ENCODE measurements at regions of chr10 and their contacts with region 1.

Region 1: GRCh38 chr10:114876602-114877300 is 55.2 kb downstream of the FHIP2A start:
- DNase-seq: peak; percentile 86
- H3K4me3 Mint-ChIP-seq: peak overlapping the region; percentile 53
- H3K27ac Mint-ChIP-seq: peak overlapping the region; percentile 89
- H3K4me1 Mint-ChIP-seq: peaks cover 18% of the 10 kb centered on the region
- H3K27me3 Mint-ChIP-seq: no peaks in the 10 kb centered on the region
- CTCF ChIP-seq: peak; percentile 90

Region 2: GRCh38 chr10:114821293-114821914 is 55.3 kb before region 1 on chr10 and contains the start of gene FHIP2A:
- CTCF ChIA-PET with region 1: interaction called, 6 read pairs
- POLR2A ChIA-PET with region 1: interaction called, 3 read pairs
- intact Hi-C with region 1: loop called (anchors 5 kb)
- DNase-seq: peak; percentile 71
- H3K4me3 Mint-ChIP-seq: peak within 1 kb of the TSS; percentile 85
- H3K27ac Mint-ChIP-seq: peak within 1 kb of the TSS; percentile 97
- H3K4me1 Mint-ChIP-seq: peaks cover 20% of the 10 kb centered on the region
- H3K27me3 Mint-ChIP-seq: no peaks in the 10 kb centered on the region
- CTCF ChIP-seq: peak; percentile 34
- total RNA-seq, gene FHIP2A: 17.2 and 25.9 TPM in 2 replicates

Region 3: GRCh38 chr10:114862456-114862855 is 14.3 kb before region 1 on chr10:
- CTCF ChIA-PET with region 1: interaction called, 42 read pairs
- POLR2A ChIA-PET with region 1: interaction called, 8 read pairs
- intact Hi-C with region 1: no loop called
- DNase-seq: no peak
- H3K4me3 Mint-ChIP-seq: no peak overlapping the region
- H3K27ac Mint-ChIP-seq: no peak overlapping the region
- H3K4me1 Mint-ChIP-seq: no peaks in the 10 kb centered on the region
- H3K27me3 Mint-ChIP-seq: no peaks in the 10 kb centered on the region
- CTCF ChIP-seq: no peak

Region 4: GRCh38 chr10:114893251-114893650 is 16.5 kb after region 1 on chr10:
- CTCF ChIA-PET with region 1: interaction called, 15 read pairs
- POLR2A ChIA-PET with region 1: no interaction called
- intact Hi-C with region 1: no loop called
- DNase-seq: no peak
- H3K4me3 Mint-ChIP-seq: no peak overlapping the region
- H3K27ac Mint-ChIP-seq: no peak overlapping the region
- H3K4me1 Mint-ChIP-seq: peaks cover 6% of the 10 kb centered on the region
- H3K27me3 Mint-ChIP-seq: no peaks in the 10 kb centered on the region
- CTCF ChIP-seq: no peak

Region 5: GRCh38 chr10:114937962-114938855 is 61.5 kb after region 1 on chr10 and contains the start of gene TRUB1:
- CTCF ChIA-PET with region 1: interaction called, 15 read pairs
- POLR2A ChIA-PET with region 1: interaction called, 5 read pairs
- intact Hi-C with region 1: loop called (anchors 2 kb)
- DNase-seq: peak; percentile 96
- H3K4me3 Mint-ChIP-seq: peak within 1 kb of the TSS; percentile 96
- H3K27ac Mint-ChIP-seq: peak within 1 kb of the TSS; percentile 97
- H3K4me1 Mint-ChIP-seq: peaks cover 20% of the 10 kb centered on the region
- H3K27me3 Mint-ChIP-seq: no peaks in the 10 kb centered on the region
- CTCF ChIP-seq: no peak
- total RNA-seq, gene TRUB1: 23.4 and 29.2 TPM in 2 replicates

Region 6: DNA sequence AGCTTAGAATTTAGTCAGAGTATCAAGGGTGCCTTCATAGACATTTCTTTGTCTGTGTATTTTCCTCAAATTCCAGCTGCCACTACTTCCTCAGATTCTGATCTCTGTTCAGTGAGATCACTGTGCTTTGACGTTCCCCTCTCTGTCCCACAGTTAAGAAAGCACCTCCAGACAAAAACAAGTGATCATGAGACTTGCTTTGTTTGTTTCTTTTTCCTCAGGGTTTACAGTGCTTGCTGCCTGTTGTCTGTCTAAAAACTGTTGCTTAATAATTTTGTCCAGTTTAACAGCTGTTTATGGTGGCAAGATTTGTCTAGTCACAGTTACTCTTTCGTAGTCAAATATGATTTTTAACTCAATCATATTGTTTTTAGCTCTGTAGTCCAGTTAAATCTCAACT is 90.3 kb after region 1 on chr10:
- CTCF ChIA-PET with region 1: interaction called, 10 read pairs
- POLR2A ChIA-PET with region 1: interaction called, 4 read pairs
- intact Hi-C with region 1: no loop called
- DNase-seq: peak; percentile 26
- H3K4me3 Mint-ChIP-seq: no peak overlapping the region
- H3K27ac Mint-ChIP-seq: peak overlapping the region; percentile 61
- H3K4me1 Mint-ChIP-seq: peaks cover 12% of the 10 kb centered on the region
- H3K27me3 Mint-ChIP-seq: no peaks in the 10 kb centered on the region
- CTCF ChIP-seq: no peak

Region 7: DNA sequence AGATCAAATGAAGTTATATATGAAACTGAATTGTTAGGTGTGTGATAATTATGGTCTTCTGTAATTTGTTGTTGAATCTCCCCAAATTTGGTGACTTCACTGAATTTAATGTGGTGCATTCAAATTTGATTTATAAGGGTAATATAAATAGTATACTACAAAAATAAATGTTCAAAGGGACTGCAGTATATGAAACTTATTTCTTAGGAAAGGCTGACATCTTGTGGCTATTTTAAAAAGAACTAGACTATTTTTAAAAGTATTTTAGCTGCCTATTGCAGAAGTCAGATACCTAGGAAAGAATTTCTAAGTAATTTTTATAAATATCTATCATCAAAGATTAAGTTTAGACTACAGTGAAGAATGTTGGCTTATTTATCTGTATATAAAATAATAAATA is 253.0 kb after region 1 on chr10:
- CTCF ChIA-PET with region 1: interaction called, 74 read pairs
- POLR2A ChIA-PET with region 1: interaction called, 7 read pairs
- intact Hi-C with region 1: loop called (anchors 1 kb)
- DNase-seq: peak; percentile 26
- H3K4me3 Mint-ChIP-seq: no peak overlapping the region
- H3K27ac Mint-ChIP-seq: no peak overlapping the region
- H3K4me1 Mint-ChIP-seq: no peaks in the 10 kb centered on the region
- H3K27me3 Mint-ChIP-seq: peaks cover 14% of the 10 kb centered on the region
- CTCF ChIP-seq: peak; percentile 46

Measured in MCF 10A (cell line).